H1 (cell line): ENCODE measurements at regions of chr16 and their contacts with region 1.

Region 1: DNA sequence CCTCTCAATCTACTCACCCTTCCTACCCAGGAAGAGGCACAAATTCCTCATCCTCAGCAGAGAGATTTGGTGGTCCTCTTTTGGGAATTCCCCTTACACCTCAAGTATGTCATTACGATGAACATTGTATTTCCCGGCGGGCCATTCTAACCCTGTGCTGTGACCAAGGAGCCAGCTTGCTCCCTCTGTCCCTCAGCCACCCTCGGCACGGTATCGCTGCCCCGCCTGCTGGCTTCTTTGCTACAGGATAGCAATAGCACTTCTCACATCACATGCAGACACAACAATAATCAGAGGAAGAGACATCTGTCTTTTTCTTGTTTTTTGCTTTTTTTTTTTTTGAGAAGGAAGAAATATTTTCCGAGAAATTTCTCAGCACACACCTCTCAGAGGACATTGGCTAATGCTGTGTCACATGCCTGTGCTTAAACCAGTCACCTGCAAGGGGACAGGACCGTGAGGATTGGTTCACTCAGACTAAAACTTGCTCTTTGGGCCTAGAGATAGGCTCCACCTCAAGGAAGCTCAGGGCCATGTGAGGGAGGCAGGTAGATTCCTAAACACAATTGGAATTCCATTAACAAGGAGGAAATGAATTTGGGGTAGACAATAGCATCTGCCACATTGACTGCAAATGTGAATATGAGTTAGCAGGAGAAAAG is 41.2 kb downstream of the TMC5 start:
- DNase-seq: no peak
- H3K4me3 ChIP-seq: no peak overlapping the region
- H3K27ac ChIP-seq: no peak overlapping the region
- H3K4me1 ChIP-seq: no peaks in the 10 kb centered on the region
- H3K27me3 ChIP-seq: no peaks in the 10 kb centered on the region
- CTCF ChIP-seq: no peak
- EP300 ChIP-seq: no peak
- POLR2A ChIP-seq: no peak
- RAD21 ChIP-seq: peak in 1 of 2 experiments; percentile 29; a peak in 1 of 4 replicates

Region 2: GRCh38 chr16:19400697-19401096 is 58.2 kb before region 1 on chr16:
- CTCF ChIA-PET with region 1: no interaction called
- POLR2A ChIA-PET with region 1: no interaction called
- DNase-seq: peak; percentile 15 to 55
- H3K4me3 ChIP-seq: no peak overlapping the region
- H3K27ac ChIP-seq: no peak overlapping the region
- H3K4me1 ChIP-seq: no peaks in the 10 kb centered on the region
- H3K27me3 ChIP-seq: no peaks in the 10 kb centered on the region; a peak in 1 of 7 replicates
- CTCF ChIP-seq: peak; percentile 47 to 56 (median 53)
- EP300 ChIP-seq: no peak
- POLR2A ChIP-seq: no peak
- RAD21 ChIP-seq: peak; percentile 73 to 74

Region 3: GRCh38 chr16:19446300-19446846 is 12.5 kb before region 1 on chr16:
- CTCF ChIA-PET with region 1: interaction called, 11 read pairs
- POLR2A ChIA-PET with region 1: no interaction called
- DNase-seq: no peak
- H3K4me3 ChIP-seq: no peak overlapping the region
- H3K27ac ChIP-seq: no peak overlapping the region
- H3K4me1 ChIP-seq: no peaks in the 10 kb centered on the region
- H3K27me3 ChIP-seq: no peaks in the 10 kb centered on the region
- CTCF ChIP-seq: no peak
- EP300 ChIP-seq: no peak
- POLR2A ChIP-seq: no peak
- RAD21 ChIP-seq: no peak